ENCODE measurements at regions of chr20 and their contacts with region 1.

Region 1: DNA sequence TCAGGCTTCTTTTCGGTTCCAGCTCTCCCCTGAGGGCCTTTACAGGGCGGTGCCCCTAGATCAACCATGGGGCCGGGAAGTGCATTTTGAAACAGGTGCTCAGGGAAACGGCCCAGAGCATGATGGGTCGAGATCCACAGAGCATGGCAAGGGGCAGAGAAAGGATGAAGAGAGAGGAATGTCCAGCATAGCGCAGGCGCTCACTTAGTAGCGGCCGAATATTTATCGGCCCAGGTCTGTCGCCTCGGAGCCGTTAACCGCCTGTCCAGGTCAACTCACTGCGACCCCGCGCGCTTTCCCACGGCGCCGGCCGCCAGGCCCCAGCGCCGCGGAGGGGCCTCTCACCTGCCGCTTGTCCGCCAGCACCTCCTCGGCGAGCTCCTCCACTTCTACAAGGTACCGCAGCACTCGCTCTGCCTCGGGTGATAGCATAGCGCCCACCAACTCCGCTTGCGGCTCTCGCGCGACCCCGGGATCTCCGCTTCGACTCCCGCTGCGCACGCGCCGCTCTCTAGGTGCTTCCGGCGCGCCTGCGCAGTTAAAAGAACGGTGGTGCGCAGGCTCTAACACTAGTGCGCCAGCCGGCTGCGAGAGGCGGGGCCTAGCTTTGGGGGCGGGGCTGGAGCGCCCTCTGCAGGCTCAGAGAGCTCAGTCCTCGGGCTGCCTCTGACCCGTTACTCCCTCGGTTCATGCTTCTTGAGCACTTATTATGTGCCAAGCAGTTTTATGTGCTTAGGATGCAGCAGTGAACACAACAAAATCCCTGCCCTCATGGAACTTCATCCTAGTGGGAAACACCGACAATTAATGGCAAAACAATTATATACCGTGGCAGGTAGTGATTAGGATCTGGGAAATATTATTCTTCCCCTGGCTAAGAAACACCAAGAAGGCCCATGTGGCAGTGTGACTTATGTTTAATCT is at the start of gene PDRG1:
- DNase-seq: peak; percentile 98
- H3K4me3 ChIP-seq: peak within 1 kb of the TSS; percentile 74 to 93 (median 85)
- H3K27ac ChIP-seq: peak within 1 kb of the TSS; percentile 71 to 86 (median 77)
- H3K4me1 ChIP-seq: peaks cover 13 to 24% (median 19%) of the 10 kb centered on the region in 4 donors
- H3K27me3 ChIP-seq: peaks cover 0 to 12% (median 3%) of the 10 kb centered on the region in 3 donors
- CTCF ChIP-seq: peak in 5 of 7 experiments; percentile 58 to 98 (median 92)
- EP300 ChIP-seq: no peak
- POLR2A ChIP-seq: no peak
- total RNA-seq, gene PDRG1: 0.58 to 2.8 (median 1.7) TPM in 4 of 5 donors, not detected in the other

Region 2: DNA sequence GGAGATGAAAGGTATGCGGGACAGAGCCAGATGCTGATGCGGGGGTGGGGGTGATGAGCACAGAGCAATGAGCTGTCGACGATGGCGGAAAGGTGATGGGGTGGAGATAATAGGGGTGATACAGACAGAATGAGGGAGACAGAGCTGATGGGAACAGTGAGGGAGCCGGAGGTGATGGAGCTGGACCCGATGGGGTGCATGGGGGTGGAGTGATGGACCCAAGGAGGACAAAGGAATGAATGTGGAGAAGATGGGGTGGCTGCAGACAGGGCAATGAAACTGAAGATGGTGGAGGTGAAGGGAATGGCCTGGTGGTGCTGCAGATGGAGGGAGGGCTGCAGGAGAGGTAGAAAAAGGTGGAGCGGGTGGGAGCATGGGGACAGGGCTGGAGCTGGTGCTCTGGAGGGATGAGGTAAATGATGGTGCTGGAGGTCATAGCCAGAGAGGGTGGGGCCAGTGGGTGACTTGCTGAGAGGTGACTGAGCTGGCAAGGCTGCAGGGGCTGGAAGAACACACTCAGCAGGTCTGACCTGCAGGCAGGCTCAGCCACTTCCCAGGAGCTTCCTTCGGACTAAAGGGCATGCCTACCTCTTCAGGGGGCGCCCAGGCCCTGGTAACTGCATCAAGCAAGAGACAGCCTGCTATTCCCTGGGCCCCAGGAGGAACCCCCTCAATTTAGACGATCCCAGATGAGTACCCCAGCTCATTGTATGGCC is 100.4 kb before region 1 on chr20:
- intact Hi-C with region 1: loop called (anchors 5 kb)
- DNase-seq: no peak
- H3K4me3 ChIP-seq: no peak overlapping the region
- H3K27ac ChIP-seq: no peak overlapping the region
- H3K4me1 ChIP-seq: peaks cover 4 to 14% (median 13%) of the 10 kb centered on the region in 4 donors
- H3K27me3 ChIP-seq: peaks cover 0 to 70% (median 8%) of the 10 kb centered on the region in 3 donors
- CTCF ChIP-seq: no peak
- EP300 ChIP-seq: no peak
- POLR2A ChIP-seq: no peak

Region 3: DNA sequence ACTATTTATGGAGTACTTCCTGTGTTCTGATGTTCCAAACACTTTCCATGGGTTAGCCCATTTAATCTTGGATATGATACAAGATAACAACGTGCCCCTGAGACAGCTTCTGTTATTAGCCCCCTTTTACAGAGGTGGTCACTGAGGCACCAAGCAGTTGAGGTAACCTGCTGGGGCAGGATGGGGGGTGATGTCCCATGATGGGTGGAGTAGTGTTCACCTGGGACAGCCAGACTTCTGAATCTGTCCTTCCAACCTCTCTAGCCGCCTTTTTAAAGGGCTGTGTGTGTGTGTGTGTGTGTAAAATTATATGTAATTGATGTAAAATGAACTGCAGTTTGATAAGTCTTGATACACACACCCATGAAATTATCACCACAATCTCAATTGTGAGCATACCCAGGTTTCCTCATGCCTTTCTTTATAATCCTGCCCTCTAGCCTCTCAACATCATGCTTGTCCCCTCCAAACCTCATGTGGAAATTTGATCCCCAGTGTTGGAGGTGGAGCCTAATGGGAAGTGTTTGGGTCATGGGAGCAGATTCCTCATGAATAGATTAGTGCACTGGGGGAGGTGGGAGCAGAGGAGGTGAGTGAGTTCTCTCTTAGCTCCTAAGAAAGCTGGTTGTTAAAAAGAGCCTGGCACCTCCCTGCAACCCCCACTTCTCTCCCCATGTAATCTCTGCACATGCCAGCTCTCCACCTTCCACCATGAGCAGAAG is 216.6 kb after region 1 on chr20:
- intact Hi-C with region 1: no loop called
- DNase-seq: no peak
- H3K4me3 ChIP-seq: no peak overlapping the region
- H3K27ac ChIP-seq: no peak overlapping the region
- H3K4me1 ChIP-seq: no peaks in the 10 kb centered on the region
- H3K27me3 ChIP-seq: no peaks in the 10 kb centered on the region
- CTCF ChIP-seq: no peak
- EP300 ChIP-seq: no peak
- POLR2A ChIP-seq: no peak

Region 4: GRCh38 chr20:32252189-32252588 is 300.4 kb after region 1 on chr20:
- intact Hi-C with region 1: no loop called
- DNase-seq: no peak
- H3K4me3 ChIP-seq: no peak overlapping the region
- H3K27ac ChIP-seq: no peak overlapping the region
- H3K4me1 ChIP-seq: peaks cover 0 to 15% (median 10%) of the 10 kb centered on the region in 4 donors
- H3K27me3 ChIP-seq: no peaks in the 10 kb centered on the region
- CTCF ChIP-seq: no peak
- EP300 ChIP-seq: no peak
- POLR2A ChIP-seq: no peak

Measured in stomach (tissue), 19 donors.